Endothelial cell of umbilical vein (primary cell): ENCODE measurements at regions of chr9 and their contacts with region 1.

Region 1: DNA sequence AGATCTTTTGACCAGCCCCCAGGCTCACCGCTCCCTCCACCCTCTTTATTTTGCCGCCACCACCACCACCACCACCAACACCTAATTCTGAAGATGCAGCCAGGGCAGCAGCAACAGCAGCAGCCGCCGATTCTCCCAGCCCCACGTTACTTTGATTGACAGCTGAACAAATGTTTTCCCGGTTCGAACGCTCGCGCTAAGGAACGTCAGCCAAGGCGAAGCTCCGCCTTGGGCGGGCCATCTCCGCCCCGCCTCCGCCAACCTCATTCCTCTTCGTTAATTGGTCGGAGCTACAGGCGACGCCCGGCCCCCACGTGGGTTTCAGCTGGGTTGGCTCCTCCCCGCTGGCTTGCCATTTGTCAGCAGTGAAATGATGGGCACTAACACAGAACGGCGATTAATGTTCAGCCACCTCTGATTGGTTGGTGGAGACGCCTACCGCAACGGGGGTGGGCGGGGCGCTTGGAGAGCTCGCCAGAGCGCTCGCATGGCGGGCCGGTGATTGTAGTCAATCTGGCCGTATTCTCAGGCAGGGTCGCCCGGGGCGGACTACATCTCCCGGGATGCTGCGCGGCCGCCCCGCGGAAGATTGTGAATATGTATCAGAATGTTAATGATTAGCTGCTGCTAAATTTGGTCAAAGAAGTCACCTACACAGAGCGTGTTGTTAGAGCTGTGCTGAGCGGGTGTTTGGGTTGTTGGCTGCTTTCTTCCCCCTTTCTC is at the start of gene TLE4:
- DNase-seq: peak; percentile 100
- H3K4me3 ChIP-seq: peak within 1 kb of the TSS; percentile 89 to 96 (median 95)
- H3K27ac ChIP-seq: peak within 1 kb of the TSS; percentile 87
- H3K4me1 ChIP-seq: peaks cover 22% of the 10 kb centered on the region
- H3K27me3 ChIP-seq: peaks cover 2 to 8% of the 10 kb centered on the region in 2 experiments
- CTCF ChIP-seq: no peak
- POLR2A ChIP-seq: peak; percentile 97
- total RNA-seq, gene TLE4: 31.4 and 34.5 TPM in 2 replicates

Region 2: GRCh38 chr9:78601957-78602565 is 969.4 kb before region 1 on chr9:
- CTCF ChIA-PET with region 1: no interaction called
- POLR2A ChIA-PET with region 1: no interaction called
- dilution Hi-C with region 1: no loop called
- intact Hi-C with region 1: loop called (anchors 2 kb)
- DNase-seq: peak; percentile 70
- H3K4me3 ChIP-seq: no peak overlapping the region
- H3K27ac ChIP-seq: no peak overlapping the region
- H3K4me1 ChIP-seq: peaks cover 10% of the 10 kb centered on the region
- H3K27me3 ChIP-seq: peaks cover 2 to 7% of the 10 kb centered on the region in 2 experiments
- CTCF ChIP-seq: peak; percentile 72 to 81
- POLR2A ChIP-seq: no peak

Region 3: GRCh38 chr9:78866207-78867132 is 705.0 kb before region 1 on chr9:
- CTCF ChIA-PET with region 1: no interaction called
- POLR2A ChIA-PET with region 1: no interaction called
- dilution Hi-C with region 1: no loop called
- intact Hi-C with region 1: no loop called
- DNase-seq: peak; percentile 80
- H3K4me3 ChIP-seq: no peak overlapping the region
- H3K27ac ChIP-seq: peak overlapping the region; percentile 54
- H3K4me1 ChIP-seq: peaks cover 20% of the 10 kb centered on the region
- H3K27me3 ChIP-seq: no peaks in the 10 kb centered on the region
- CTCF ChIP-seq: no peak
- POLR2A ChIP-seq: no peak

Region 4: GRCh38 chr9:79012561-79012960 is 558.9 kb before region 1 on chr9:
- CTCF ChIA-PET with region 1: no interaction called
- POLR2A ChIA-PET with region 1: no interaction called
- dilution Hi-C with region 1: no loop called
- intact Hi-C with region 1: loop called (anchors 5 kb)
- DNase-seq: peak; percentile 70
- H3K4me3 ChIP-seq: no peak overlapping the region
- H3K27ac ChIP-seq: peak overlapping the region; percentile 98
- H3K4me1 ChIP-seq: peaks cover 45% of the 10 kb centered on the region
- H3K27me3 ChIP-seq: no peaks in the 10 kb centered on the region
- CTCF ChIP-seq: no peak
- POLR2A ChIP-seq: no peak

Region 5: DNA sequence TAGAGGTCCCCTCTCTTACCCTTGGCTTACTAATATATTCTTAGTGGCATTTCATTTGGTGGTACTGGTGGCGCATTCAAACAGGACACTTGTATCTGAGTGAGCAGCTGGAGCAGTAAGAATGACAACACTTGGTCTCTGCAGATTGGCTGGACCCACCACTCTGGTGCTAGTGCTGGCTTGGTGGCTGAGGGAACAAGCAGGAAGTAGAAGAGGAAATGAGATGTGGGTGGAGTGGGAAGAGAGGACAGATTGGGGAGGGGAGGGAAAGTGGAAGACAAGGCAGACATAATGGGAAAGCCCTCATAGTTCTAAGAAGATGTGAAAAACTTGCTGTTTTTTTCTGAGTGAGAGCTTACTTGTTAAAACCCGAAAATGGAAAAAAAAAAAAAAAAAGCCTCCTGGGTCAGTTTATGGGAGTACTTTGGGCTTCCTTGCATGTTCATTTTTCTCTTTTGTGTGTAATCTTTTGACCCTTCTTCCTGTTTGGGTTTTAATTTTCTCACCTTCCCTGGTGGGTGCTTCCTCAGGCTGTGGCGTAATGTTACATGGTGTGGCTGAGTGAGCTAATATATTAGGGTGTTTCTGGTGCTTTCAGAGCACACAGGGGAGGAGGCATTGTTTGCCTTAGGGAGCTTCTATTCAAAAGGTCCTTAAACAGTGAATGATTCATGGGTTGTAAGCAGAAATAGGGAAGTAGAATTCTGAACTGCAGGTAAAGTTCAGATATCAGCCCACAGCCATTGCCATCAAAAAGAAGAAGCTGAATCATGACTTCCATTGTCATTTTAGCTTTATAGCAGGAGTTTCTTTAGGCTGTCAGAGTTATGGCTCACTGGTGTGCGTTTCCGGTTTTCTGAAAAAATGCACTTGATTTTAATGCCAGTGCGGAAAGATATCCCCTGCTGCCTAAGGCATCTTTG is 52.6 kb after region 1 on chr9:
- CTCF ChIA-PET with region 1: interaction called, 5 read pairs
- POLR2A ChIA-PET with region 1: interaction called, 10 read pairs
- dilution Hi-C with region 1: no loop called
- intact Hi-C with region 1: loop called (anchors 1 kb)
- DNase-seq: peak; percentile 70
- H3K4me3 ChIP-seq: no peak overlapping the region
- H3K27ac ChIP-seq: peak overlapping the region; percentile 4
- H3K4me1 ChIP-seq: peaks cover 19% of the 10 kb centered on the region
- H3K27me3 ChIP-seq: no peaks in the 10 kb centered on the region
- CTCF ChIP-seq: no peak
- POLR2A ChIP-seq: no peak

Region 6: GRCh38 chr9:79719989-79720388 is 148.5 kb after region 1 on chr9:
- CTCF ChIA-PET with region 1: no interaction called
- POLR2A ChIA-PET with region 1: no interaction called
- dilution Hi-C with region 1: no loop called
- intact Hi-C with region 1: loop called (anchors 10 kb)
- DNase-seq: no peak
- H3K4me3 ChIP-seq: no peak overlapping the region
- H3K27ac ChIP-seq: no peak overlapping the region
- H3K4me1 ChIP-seq: no peaks in the 10 kb centered on the region
- H3K27me3 ChIP-seq: no peaks in the 10 kb centered on the region
- CTCF ChIP-seq: no peak
- POLR2A ChIP-seq: no peak

Region 7: DNA sequence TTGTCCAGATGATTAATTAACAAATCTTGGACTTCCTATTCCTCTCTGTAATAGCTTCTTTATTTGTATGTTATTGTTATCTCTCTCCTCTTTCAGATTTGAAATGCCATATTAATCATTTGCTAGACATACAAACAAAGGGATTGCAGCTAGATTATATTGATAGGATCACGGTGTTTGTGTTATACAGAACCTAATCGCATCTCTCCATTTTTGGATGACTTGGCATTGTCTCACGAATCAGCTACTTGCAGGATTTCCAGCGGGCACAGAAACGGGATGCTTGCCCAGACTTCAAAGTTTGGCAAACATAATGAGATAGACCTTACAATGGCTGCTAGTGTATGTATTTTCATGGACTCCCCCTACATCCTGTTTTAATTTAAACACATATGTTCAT is 368.3 kb after region 1 on chr9:
- CTCF ChIA-PET with region 1: no interaction called
- POLR2A ChIA-PET with region 1: no interaction called
- dilution Hi-C with region 1: no loop called
- intact Hi-C with region 1: loop called (anchors 2 kb)
- DNase-seq: peak; percentile 32
- H3K4me3 ChIP-seq: no peak overlapping the region
- H3K27ac ChIP-seq: no peak overlapping the region
- H3K4me1 ChIP-seq: peaks cover 19% of the 10 kb centered on the region
- H3K27me3 ChIP-seq: no peaks in the 10 kb centered on the region
- CTCF ChIP-seq: no peak
- POLR2A ChIP-seq: no peak

Region 8: GRCh38 chr9:81389569-81389993 is 1818.1 kb after region 1 on chr9:
- CTCF ChIA-PET with region 1: no interaction called
- POLR2A ChIA-PET with region 1: no interaction called
- dilution Hi-C with region 1: no loop called
- intact Hi-C with region 1: loop called (anchors 2 kb)
- DNase-seq: peak; percentile 98
- H3K4me3 ChIP-seq: no peak overlapping the region
- H3K27ac ChIP-seq: peak overlapping the region; percentile 100
- H3K4me1 ChIP-seq: peaks cover 31% of the 10 kb centered on the region
- H3K27me3 ChIP-seq: no peaks in the 10 kb centered on the region
- CTCF ChIP-seq: no peak
- POLR2A ChIP-seq: peak; percentile 60